ENCODE measurements at regions of chr17 and their contacts with region 1.

Region 1: DNA sequence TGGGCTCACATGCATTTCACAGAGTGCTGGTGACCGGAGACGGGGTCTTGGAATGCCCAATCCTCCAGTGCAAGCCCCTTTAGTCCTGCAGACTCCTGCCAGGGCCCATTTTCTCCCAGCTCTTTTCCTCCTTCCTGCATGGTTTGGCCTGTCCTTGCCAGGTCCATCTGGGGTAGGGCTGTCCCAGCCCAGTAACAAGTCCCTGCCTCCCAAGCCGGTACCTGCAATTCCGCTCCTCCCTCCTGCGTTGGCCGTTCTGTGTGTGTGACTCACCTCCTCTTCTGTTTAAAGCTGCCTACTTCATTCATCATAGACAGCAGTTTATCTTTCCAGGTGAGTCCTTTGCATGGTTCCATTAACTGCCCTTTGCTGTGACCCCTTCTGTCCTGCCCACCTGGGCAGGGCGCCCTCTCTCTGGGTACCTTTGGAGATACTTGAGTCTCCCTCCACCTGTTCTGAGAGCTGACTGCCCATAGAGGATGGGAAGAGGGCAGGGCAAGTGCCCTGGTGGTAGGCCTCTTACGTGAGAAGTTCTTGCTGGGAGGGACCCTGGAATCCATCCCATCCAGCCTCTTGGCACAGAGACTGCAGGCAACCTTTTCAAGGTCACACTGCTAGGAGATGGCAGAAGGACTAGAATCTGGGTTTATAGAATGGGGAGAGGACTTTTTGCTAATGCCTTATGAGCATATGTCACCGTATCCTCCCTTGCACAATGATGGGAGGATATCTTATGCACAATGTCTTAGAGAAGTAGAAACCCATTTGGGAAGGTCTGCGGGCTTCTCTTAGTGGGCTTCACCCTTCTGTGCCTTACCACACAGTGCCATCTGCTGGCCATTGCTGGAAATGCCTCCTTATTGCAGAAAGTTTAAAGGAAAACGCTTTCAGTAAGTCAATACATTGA is 29.7 kb upstream of the LGALS9 start:
- DNase-seq: peak; percentile 66 to 75 (median 69)
- H3K4me3 ChIP-seq: no peak overlapping the region
- H3K4me3 Mint-ChIP-seq: no peak overlapping the region
- H3K27ac ChIP-seq: no peak overlapping the region
- H3K27ac Mint-ChIP-seq: peak overlapping the region in 2 of 7 donors; percentile 19 to 55
- H3K4me1 ChIP-seq: peaks cover 3% of the 10 kb centered on the region
- H3K4me1 Mint-ChIP-seq: peaks cover 0 to 5% (median 3%) of the 10 kb centered on the region in 4 donors
- H3K27me3 ChIP-seq: no peaks in the 10 kb centered on the region
- H3K27me3 Mint-ChIP-seq: no peaks in the 10 kb centered on the region

Region 2: DNA sequence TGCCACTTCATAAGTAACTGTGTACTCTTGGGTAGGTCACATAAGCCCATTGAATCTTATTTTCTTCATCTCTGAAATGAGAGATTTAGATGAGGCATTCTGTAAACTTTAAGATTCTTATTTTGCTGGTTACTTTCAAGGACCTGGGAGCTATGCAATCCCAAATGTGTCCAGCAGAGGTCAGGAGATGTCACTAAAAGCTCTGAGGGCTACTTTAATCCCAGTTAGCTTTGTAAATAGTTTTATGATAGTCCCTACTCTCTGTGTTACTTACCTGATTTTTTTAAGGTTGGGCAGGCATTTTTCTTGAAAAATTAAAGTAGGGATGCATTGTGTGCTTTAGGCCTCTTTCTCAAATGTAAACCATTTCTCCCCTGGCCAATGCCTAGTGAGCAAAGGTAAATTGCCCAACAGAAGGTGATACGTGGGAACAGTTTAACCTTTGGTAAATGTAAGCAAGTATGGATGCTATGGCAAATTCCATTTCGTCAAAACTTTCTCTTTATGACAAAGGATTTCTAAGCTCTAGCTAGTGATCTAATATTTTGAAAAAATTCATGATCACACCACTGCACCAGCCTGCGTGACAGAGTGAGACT is 364.5 kb before region 1 on chr17:
- CTCF ChIA-PET with region 1: interaction called, 332 read pairs
- POLR2A ChIA-PET with region 1: interaction called, 6 read pairs
- intact Hi-C with region 1: loop called (anchors 1 kb)
- DNase-seq: peak; percentile 57 to 72 (median 64)
- H3K4me3 ChIP-seq: no peak overlapping the region
- H3K4me3 Mint-ChIP-seq: no peak overlapping the region
- H3K27ac ChIP-seq: no peak overlapping the region
- H3K27ac Mint-ChIP-seq: peak overlapping the region in 1 of 7 donors; percentile 41
- H3K4me1 ChIP-seq: no peaks in the 10 kb centered on the region
- H3K4me1 Mint-ChIP-seq: no peaks in the 10 kb centered on the region
- H3K27me3 ChIP-seq: no peaks in the 10 kb centered on the region
- H3K27me3 Mint-ChIP-seq: no peaks in the 10 kb centered on the region

Region 3: DNA sequence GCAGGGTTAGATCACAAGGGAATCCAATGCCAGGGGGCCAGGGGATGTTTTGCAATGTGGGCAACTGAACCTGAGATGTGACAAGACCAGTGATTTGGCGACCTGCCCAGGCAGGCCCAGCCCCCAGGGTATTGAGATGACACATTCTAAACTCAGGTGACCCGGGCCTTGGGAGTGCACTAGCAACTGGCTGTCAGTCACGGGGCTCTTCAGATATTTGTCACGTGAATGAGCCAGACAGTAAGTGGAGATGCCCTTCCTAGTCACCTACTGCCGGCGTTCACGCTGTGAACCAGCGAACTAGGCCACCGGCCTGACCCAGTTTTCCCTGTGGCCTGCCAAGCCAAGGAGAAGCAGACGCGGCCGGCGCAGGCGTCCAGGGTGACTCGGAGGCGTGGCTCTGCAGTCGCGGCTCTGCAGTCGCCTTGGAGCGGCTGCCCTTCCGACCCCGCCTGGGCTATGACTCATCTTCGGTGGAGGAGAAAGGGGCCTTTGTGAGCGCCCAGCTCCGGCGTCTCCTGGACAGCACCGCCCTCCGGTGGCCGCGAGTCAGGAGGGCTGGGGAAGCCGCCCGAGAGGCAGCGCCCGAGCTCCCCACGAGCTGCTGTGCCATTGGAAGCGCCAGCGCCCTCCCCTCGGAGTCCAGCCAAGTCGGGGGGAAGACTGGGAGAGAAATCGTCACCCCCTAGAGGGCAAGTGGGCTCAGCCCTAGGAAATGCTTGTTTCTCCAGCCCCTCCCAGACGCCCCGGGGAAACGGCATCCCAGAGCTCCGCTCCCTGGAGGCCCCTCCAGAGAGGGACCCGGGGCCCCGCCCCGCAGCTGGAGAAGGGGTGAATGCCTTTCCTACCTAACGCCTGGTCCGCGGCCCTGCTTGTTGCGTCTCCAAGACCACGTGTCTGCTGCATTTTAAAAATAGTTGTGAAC is 268.6 kb before region 1 on chr17:
- CTCF ChIA-PET with region 1: interaction called, 12 read pairs
- POLR2A ChIA-PET with region 1: interaction called, 5 read pairs
- intact Hi-C with region 1: loop called (anchors 1 kb)
- DNase-seq: peak; percentile 79 to 97 (median 80)
- H3K4me3 ChIP-seq: peak overlapping the region; percentile 47 to 57
- H3K4me3 Mint-ChIP-seq: peak overlapping the region; percentile 72 to 91 (median 85)
- H3K27ac ChIP-seq: peak overlapping the region; percentile 47
- H3K27ac Mint-ChIP-seq: peak overlapping the region; percentile 68 to 93 (median 87)
- H3K4me1 ChIP-seq: peaks cover 7% of the 10 kb centered on the region
- H3K4me1 Mint-ChIP-seq: peaks cover 9 to 22% (median 17%) of the 10 kb centered on the region in 4 donors
- H3K27me3 ChIP-seq: no peaks in the 10 kb centered on the region
- H3K27me3 Mint-ChIP-seq: no peaks in the 10 kb centered on the region

Region 4: DNA sequence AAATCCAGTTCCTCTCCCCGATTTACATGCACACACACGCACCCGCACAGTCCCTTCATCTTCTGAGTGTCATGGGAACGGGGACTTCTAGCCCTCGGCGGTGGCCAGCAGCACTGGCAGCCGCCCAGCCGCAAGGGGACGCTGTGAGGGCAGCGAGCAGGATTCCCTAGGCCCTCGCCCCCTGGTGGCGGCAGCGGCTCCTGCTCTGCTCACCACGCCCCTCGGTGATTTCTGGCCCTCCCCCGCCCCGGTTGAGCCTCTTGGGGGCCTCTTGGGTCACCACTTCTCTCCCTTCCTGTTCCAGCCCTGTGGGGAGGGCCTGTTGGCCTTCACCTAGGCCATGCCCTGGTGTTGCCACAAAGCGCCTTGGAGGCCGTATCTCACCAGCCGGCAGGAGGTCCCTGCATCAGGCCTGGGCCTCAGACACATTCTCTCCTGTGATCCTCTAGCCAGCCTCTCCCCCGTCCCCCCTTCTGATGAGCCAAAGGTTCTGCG is 220.3 kb before region 1 on chr17:
- CTCF ChIA-PET with region 1: interaction called, 46 read pairs
- POLR2A ChIA-PET with region 1: no interaction called
- intact Hi-C with region 1: no loop called
- DNase-seq: peak; percentile 65 to 72 (median 68)
- H3K4me3 ChIP-seq: no peak overlapping the region
- H3K4me3 Mint-ChIP-seq: no peak overlapping the region
- H3K27ac ChIP-seq: no peak overlapping the region
- H3K27ac Mint-ChIP-seq: peak overlapping the region in 2 of 7 donors; percentile 57 to 71
- H3K4me1 ChIP-seq: peaks cover 4% of the 10 kb centered on the region
- H3K4me1 Mint-ChIP-seq: peaks cover 0 to 8% (median 2%) of the 10 kb centered on the region in 4 donors
- H3K27me3 ChIP-seq: no peaks in the 10 kb centered on the region
- H3K27me3 Mint-ChIP-seq: peaks cover 1 to 8% of the 10 kb centered on the region in 2 donors

Region 5: GRCh38 chr17:27565874-27566670 is 35.2 kb before region 1 on chr17:
- CTCF ChIA-PET with region 1: interaction called, 10 read pairs
- POLR2A ChIA-PET with region 1: no interaction called
- intact Hi-C with region 1: no loop called
- DNase-seq: no peak
- H3K4me3 ChIP-seq: no peak overlapping the region
- H3K4me3 Mint-ChIP-seq: no peak overlapping the region
- H3K27ac ChIP-seq: no peak overlapping the region
- H3K27ac Mint-ChIP-seq: no peak overlapping the region
- H3K4me1 ChIP-seq: peaks cover 5% of the 10 kb centered on the region
- H3K4me1 Mint-ChIP-seq: peaks cover 15 to 18% (median 17%) of the 10 kb centered on the region in 4 donors
- H3K27me3 ChIP-seq: no peaks in the 10 kb centered on the region
- H3K27me3 Mint-ChIP-seq: no peaks in the 10 kb centered on the region

Region 6: GRCh38 chr17:27616414-27616813 is 15.1 kb after region 1 on chr17:
- CTCF ChIA-PET with region 1: interaction called, 28 read pairs
- POLR2A ChIA-PET with region 1: no interaction called
- intact Hi-C with region 1: no loop called
- DNase-seq: no peak
- H3K4me3 ChIP-seq: no peak overlapping the region
- H3K4me3 Mint-ChIP-seq: peak overlapping the region in 3 of 8 donors; percentile 14 to 63 (median 15)
- H3K27ac ChIP-seq: no peak overlapping the region
- H3K27ac Mint-ChIP-seq: peak overlapping the region; percentile 8 to 89 (median 73)
- H3K4me1 ChIP-seq: peaks cover 20% of the 10 kb centered on the region
- H3K4me1 Mint-ChIP-seq: peaks cover 15 to 36% (median 18%) of the 10 kb centered on the region in 4 donors
- H3K27me3 ChIP-seq: no peaks in the 10 kb centered on the region
- H3K27me3 Mint-ChIP-seq: no peaks in the 10 kb centered on the region

Region 7: GRCh38 chr17:27654654-27655524 is 53.6 kb after region 1 on chr17:
- CTCF ChIA-PET with region 1: interaction called, 358 read pairs
- POLR2A ChIA-PET with region 1: no interaction called
- intact Hi-C with region 1: loop called (anchors 1 kb)
- DNase-seq: peak; percentile 39 to 57 (median 47)
- H3K4me3 ChIP-seq: no peak overlapping the region
- H3K4me3 Mint-ChIP-seq: peak overlapping the region in 1 of 8 donors; percentile 8
- H3K27ac ChIP-seq: no peak overlapping the region
- H3K27ac Mint-ChIP-seq: no peak overlapping the region
- H3K4me1 ChIP-seq: peaks cover 6% of the 10 kb centered on the region
- H3K4me1 Mint-ChIP-seq: peaks cover 0 to 12% (median 7%) of the 10 kb centered on the region in 4 donors
- H3K27me3 ChIP-seq: no peaks in the 10 kb centered on the region
- H3K27me3 Mint-ChIP-seq: peaks cover 0 to 6% of the 10 kb centered on the region in 2 donors

Region 8: GRCh38 chr17:27778193-27778592 is 176.9 kb after region 1 on chr17:
- CTCF ChIA-PET with region 1: no interaction called
- POLR2A ChIA-PET with region 1: no interaction called
- intact Hi-C with region 1: no loop called
- DNase-seq: no peak
- H3K4me3 ChIP-seq: no peak overlapping the region
- H3K4me3 Mint-ChIP-seq: no peak overlapping the region
- H3K27ac ChIP-seq: no peak overlapping the region
- H3K27ac Mint-ChIP-seq: no peak overlapping the region
- H3K4me1 ChIP-seq: no peaks in the 10 kb centered on the region
- H3K4me1 Mint-ChIP-seq: no peaks in the 10 kb centered on the region
- H3K27me3 ChIP-seq: no peaks in the 10 kb centered on the region
- H3K27me3 Mint-ChIP-seq: peaks cover 0 to 2% of the 10 kb centered on the region in 2 donors